Astrocyte of the cerebellum (primary cell): ENCODE measurements at regions of chr13 and their contacts with region 1.

Region 1: DNA sequence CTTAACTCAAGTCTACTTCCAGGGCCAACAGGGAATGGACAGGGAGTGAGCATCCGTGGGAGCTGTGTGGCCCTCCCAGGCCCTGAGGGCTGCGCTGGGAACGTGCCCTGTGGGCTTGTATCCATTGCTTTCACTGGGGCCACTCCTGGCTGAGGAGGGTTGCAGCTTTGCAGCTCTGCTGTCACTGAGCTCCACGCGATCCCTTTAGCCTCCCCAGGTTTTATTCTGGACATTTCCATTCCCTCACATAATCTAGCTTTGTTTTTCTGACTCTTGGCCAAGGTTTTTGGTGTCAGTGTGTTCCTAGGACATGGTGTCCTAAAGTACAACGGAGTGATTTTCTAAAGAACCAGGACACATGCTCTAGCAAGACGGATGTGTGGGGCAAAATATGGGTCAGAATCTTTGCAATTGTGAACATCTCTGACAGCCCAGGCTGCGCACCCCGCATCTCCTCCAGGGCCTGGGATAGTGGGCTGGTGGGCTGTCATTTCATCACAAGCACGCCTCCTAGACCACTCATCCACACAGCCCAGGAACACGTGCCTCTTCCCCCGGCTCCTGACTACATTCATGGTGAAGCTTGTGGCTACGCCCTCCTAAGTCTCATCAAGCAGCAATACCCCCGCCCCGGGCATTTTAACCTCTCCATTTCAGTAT is 28.0 kb downstream of the GGACT start:
- DNase-seq: no peak
- H3K4me3 ChIP-seq: no peak overlapping the region
- CTCF ChIP-seq: no peak

Region 2: DNA sequence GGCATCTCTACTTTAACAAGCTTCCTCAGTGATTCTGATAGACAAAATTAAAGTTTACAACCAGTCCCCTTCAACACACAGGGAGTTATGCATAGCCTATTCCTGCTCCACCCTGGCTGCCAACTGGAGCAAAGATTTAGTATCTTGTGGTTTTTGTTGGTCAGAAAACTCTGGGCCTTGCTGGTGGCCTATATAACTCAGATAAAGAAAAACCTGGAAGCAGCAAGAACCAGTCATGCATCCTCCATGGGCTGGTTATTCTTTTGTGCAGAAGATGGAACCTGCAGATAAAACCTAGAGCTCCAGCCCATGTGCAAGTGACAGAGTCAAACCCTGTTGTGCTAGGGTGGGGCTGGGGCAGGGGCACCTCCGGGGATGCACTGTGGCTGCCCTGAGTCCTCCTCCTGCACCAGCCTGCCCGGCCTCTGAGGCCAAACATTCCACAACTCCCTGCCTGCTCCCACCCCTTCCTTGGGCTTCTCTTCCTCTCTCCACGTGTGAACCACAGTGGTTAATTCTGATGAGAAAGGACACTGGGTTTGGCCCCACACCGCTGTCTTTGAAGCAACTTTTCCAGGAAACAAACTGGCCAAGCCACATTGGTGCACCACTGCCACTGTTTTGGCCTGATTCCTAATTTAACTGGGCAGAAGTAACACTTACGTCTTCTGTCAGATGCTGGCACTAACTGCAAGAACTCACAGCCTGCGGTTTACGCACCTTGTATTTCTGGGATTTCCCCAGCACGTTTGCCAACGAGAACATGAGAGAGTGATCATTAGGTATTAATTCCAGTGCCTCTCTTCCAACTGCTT is 51.3 kb after region 1 on chr13:
- in situ Hi-C with region 1: no loop called
- DNase-seq: peak; percentile 69
- H3K4me3 ChIP-seq: no peak overlapping the region
- CTCF ChIP-seq: no peak

Region 3: GRCh38 chr13:101115762-101116171 is 555.1 kb after region 1 on chr13:
- in situ Hi-C with region 1: loop called (anchors 5 kb)
- DNase-seq: peak; percentile 26
- H3K4me3 ChIP-seq: no peak overlapping the region
- CTCF ChIP-seq: peak; percentile 59